IMR-90 (cell line): ENCODE measurements at regions of chr18 and their contacts with region 1.

Region 1: DNA sequence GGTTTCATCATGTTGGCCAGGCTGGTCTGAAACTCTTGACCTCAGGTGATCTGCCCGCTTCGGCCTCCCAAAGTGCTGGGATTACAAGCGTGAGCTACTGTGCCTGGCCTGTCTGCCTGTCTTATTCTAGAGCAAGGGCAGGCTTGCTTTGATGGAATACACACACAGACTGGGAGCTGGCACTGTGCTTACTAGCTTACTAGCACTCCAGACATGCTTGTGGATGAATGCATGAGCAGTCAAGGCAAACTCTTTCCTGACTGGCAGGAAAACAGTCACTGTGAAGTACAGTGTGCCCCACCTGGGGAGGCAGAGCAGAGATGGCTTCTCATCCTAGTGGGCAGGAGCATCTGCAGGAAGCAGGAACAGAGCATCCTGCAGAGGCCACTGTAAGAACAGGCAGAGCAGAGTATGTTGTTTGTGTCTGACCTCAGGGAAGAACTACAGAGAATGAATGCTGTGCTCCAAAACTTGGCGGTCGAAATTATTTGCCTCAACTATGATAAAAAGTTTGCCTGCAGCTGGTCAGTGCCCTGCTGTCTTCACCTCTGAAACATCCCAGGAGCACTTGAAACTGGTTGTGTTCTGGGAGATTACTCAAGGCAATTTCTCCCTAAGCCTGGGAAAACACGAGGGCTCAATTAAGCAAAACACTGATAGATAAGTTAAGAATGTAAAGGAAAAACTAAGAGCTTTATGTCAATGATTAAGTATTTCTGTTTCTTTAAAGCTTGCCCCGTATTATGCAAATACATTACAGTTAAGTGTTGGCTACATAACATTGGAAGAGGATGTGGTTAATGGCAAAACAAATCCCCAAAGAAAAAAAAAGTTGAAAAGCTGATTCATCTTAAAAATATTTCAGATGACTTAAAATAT is 102.4 kb downstream of the VAPA start:
- DNase-seq: peak; percentile 96
- ATAC-seq: peak; percentile 86
- H3K4me3 ChIP-seq: no peak overlapping the region
- H3K27ac ChIP-seq: peak overlapping the region; percentile 71
- H3K4me1 ChIP-seq: peaks cover 13% of the 10 kb centered on the region
- H3K27me3 ChIP-seq: no peaks in the 10 kb centered on the region
- CTCF ChIP-seq: peak; percentile 64
- POLR2A ChIP-seq: no peak
- RAD21 ChIP-seq: peak; percentile 68

Region 2: GRCh38 chr18:10121786-10122542 is 105.8 kb after region 1 on chr18:
- CTCF ChIA-PET with region 1: no interaction called
- POLR2A ChIA-PET with region 1: no interaction called
- dilution Hi-C with region 1: no loop called
- in situ Hi-C with region 1: no loop called
- intact Hi-C with region 1: loop called (anchors 5 kb)
- DNase-seq: peak; percentile 86
- ATAC-seq: peak; percentile 94
- H3K4me3 ChIP-seq: no peak overlapping the region
- H3K27ac ChIP-seq: peak overlapping the region; percentile 80; the same call in 1 of the 2 replicates
- H3K4me1 ChIP-seq: peaks cover 14% of the 10 kb centered on the region
- H3K27me3 ChIP-seq: no peaks in the 10 kb centered on the region; the same call in 1 of the 2 replicates
- CTCF ChIP-seq: no peak
- POLR2A ChIP-seq: no peak
- RAD21 ChIP-seq: no peak

Region 3: GRCh38 chr18:10230072-10230471 is 213.9 kb after region 1 on chr18:
- CTCF ChIA-PET with region 1: no interaction called
- POLR2A ChIA-PET with region 1: no interaction called
- dilution Hi-C with region 1: no loop called
- in situ Hi-C with region 1: no loop called
- intact Hi-C with region 1: loop called (anchors 10 kb)
- DNase-seq: peak; percentile 83
- ATAC-seq: peak; percentile 47; the same call in 1 of the 2 replicates
- H3K4me3 ChIP-seq: no peak overlapping the region
- H3K27ac ChIP-seq: no peak overlapping the region
- H3K4me1 ChIP-seq: peaks cover 4% of the 10 kb centered on the region
- H3K27me3 ChIP-seq: no peaks in the 10 kb centered on the region
- CTCF ChIP-seq: peak; percentile 34
- POLR2A ChIP-seq: no peak
- RAD21 ChIP-seq: peak; percentile 34; the same call in 1 of the 2 replicates